ENCODE measurements at regions of chr1 and their contacts with region 1.

Region 1: DNA sequence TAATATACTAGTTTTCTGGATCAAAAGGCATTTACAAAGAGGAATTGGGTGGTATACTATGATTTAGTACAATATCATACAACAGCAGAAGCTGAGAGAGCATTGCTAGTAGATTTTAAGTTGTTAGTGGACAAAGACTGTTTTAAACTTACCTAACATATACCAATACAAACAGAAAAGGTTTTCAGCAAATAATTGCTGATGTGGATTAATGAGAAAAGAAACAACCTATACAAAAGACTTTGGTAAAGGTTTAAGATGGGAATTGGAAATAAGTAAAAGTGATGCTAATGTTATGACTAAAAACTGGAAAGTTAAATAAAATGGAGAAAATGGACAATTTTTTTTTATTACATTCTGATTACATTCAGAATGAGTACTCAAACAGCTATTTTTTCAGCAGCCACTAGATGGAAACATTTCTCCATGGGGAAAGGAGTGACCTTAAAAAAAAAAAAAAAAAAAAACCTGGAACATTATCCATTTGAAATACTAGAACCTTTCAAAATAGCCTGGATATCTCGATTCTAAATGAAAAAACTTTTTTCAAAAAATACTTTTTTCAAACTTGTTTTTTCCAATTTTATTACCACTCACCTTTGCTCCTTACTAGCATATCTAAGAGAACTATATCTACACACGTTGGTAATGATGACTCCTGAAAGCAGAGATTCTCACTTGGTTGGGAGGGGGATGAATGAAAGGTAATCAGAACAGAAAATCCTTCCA is 55.4 kb downstream of the EPRS1 start:
- DNase-seq: peak; percentile 28 to 43 (median 37)
- H3K4me3 ChIP-seq: no peak overlapping the region
- H3K27ac ChIP-seq: no peak overlapping the region
- H3K4me1 ChIP-seq: no peaks in the 10 kb centered on the region
- H3K27me3 ChIP-seq: no peaks in the 10 kb centered on the region

Region 2: GRCh38 chr1:219757890-219758289 is 233.1 kb before region 1 on chr1:
- CTCF ChIA-PET with region 1: no interaction called
- POLR2A ChIA-PET with region 1: no interaction called
- DNase-seq: no peak
- H3K4me3 ChIP-seq: no peak overlapping the region
- H3K27ac ChIP-seq: no peak overlapping the region
- H3K4me1 ChIP-seq: no peaks in the 10 kb centered on the region
- H3K27me3 ChIP-seq: no peaks in the 10 kb centered on the region

Region 3: DNA sequence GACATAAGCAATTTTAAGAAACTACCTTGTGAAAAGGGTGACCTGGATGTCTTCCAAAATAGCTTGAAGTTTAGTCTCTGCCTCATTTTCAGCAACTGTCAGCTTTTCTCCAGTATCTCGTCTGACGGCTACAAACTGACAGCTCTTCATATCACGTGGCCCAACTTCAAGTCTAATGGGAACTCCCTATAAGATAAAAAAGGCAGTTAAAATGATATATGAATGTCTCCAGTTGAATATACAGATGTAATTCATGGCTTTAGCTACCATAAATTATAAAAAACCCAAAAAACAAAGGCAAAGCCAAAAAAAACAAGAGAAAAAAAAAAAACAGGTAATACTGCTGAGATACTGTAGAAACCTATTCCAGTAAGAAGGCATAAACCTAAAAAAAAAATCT is 17.7 kb before region 1 on chr1:
- CTCF ChIA-PET with region 1: interaction called, 20 read pairs
- POLR2A ChIA-PET with region 1: no interaction called
- DNase-seq: no peak
- H3K4me3 ChIP-seq: no peak overlapping the region
- H3K27ac ChIP-seq: no peak overlapping the region
- H3K4me1 ChIP-seq: no peaks in the 10 kb centered on the region
- H3K27me3 ChIP-seq: no peaks in the 10 kb centered on the region

Measured in common myeloid progenitor, CD34-positive (primary cell).